K562 (cell line): ENCODE measurements at regions of chr19 and their contacts with region 1.

Region 1: DNA sequence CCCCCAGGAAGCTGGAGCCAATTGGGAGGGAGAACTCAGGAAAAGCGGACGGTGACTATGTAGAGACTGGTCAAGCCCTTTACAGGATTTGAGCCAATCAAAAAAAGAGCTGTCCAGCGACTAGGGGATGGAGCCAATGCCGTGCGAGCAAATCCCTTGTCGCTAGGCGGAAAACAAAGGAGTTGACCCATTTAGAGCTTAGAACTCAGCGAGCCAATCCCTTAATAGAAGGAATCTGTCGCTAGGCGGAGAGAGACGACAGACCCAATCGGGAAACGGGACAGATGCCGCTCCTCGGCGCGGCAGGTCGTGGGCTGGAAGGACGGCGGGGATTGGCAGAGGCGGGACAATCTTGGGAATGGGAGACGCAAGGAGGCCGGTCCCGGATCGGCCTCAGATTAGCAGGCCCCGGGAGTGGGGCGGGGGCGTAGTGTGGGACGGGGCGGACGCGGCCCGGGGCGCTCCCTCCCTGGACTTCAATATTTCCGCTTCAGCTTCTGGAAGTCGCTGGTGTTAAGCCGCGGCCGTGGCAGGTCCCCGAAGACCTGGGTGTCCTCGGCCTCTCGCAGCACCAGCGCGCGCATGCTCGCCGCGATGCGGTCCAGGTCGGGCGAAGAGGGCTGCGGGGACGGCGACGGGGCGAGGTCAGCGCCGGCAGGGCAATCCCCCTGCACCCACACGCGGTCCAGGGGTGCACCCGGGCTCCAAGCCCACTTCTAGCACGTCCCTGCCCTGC is 2.2 kb upstream of the PNKP start:
- DNase-seq: peak; percentile 82 to 99 (median 89)
- ATAC-seq: peak; percentile 87
- H3K4me3 ChIP-seq: peak overlapping the region; percentile 47
- H3K27ac ChIP-seq: peak overlapping the region; percentile 70
- H3K4me1 ChIP-seq: peaks cover 40 to 84% of the 10 kb centered on the region in 2 experiments
- H3K27me3 ChIP-seq: no peaks in the 10 kb centered on the region
- CTCF ChIP-seq: 0 out of 6 replicates have a peak, but pooled peaks of 1 of the 3 experiments have one; percentile 1
- EP300 ChIP-seq: no peak
- POLR2A ChIP-seq: peak; percentile 60
- RAD21 ChIP-seq: no peak

Region 2: GRCh38 chr19:49497047-49497788 is 372.4 kb before region 1 on chr19:
- CTCF ChIA-PET with region 1: no interaction called
- POLR2A ChIA-PET with region 1: interaction called, 6 read pairs
- in situ Hi-C with region 1: loop called (anchors 10 kb)
- intact Hi-C with region 1: no loop called
- DNase-seq: peak; percentile 47 to 89 (median 63)
- ATAC-seq: peak; percentile 37
- H3K4me3 ChIP-seq: peak overlapping the region; percentile 89
- H3K27ac ChIP-seq: peak overlapping the region; percentile 94
- H3K4me1 ChIP-seq: peaks cover 33 to 44% of the 10 kb centered on the region in 2 experiments; a peak in 4 of 5 replicates
- H3K27me3 ChIP-seq: no peaks in the 10 kb centered on the region
- CTCF ChIP-seq: no peak
- EP300 ChIP-seq: no peak
- POLR2A ChIP-seq: peak; percentile 68
- RAD21 ChIP-seq: no peak

Region 3: DNA sequence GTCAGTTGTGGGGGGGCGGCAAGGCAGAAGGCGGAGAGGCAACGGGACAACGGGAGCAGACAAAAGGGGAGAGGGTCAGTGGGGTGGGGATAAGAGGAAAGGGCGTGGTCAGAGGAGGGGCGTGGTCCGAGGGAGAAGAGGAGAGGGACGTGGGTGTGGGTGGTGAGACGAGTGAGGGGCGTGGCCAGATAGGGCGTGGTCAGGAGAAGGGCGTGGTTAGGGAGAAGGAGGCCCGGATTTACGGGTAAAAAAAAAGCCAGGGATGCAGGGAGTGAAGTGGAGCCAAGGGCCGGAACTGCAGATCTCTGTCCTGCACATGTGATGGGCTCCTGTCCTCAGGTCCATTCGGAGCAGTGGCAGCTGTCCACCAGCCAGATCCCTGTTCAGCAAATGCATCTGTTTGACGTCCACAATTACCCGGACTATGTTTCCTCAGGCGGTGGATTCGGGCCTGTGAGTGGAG is 157.2 kb before region 1 on chr19:
- CTCF ChIA-PET with region 1: no interaction called
- POLR2A ChIA-PET with region 1: no interaction called
- in situ Hi-C with region 1: no loop called
- intact Hi-C with region 1: loop called (anchors 10 kb)
- DNase-seq: peak; percentile 95 to 97 (median 96)
- ATAC-seq: peak; percentile 91
- H3K4me3 ChIP-seq: peak overlapping the region; percentile 34
- H3K27ac ChIP-seq: peak overlapping the region; percentile 50; the same call in 2 of the 3 replicates
- H3K4me1 ChIP-seq: peaks cover 19 to 33% of the 10 kb centered on the region in 2 experiments; a peak in 4 of 5 replicates
- H3K27me3 ChIP-seq: no peaks in the 10 kb centered on the region
- CTCF ChIP-seq: no peak
- EP300 ChIP-seq: peak; percentile 7; the same call in 1 of the 2 replicates
- POLR2A ChIP-seq: peak; percentile 39
- RAD21 ChIP-seq: no peak